ENCODE measurements at regions of chr10 and their contacts with region 1.

Region 1: DNA sequence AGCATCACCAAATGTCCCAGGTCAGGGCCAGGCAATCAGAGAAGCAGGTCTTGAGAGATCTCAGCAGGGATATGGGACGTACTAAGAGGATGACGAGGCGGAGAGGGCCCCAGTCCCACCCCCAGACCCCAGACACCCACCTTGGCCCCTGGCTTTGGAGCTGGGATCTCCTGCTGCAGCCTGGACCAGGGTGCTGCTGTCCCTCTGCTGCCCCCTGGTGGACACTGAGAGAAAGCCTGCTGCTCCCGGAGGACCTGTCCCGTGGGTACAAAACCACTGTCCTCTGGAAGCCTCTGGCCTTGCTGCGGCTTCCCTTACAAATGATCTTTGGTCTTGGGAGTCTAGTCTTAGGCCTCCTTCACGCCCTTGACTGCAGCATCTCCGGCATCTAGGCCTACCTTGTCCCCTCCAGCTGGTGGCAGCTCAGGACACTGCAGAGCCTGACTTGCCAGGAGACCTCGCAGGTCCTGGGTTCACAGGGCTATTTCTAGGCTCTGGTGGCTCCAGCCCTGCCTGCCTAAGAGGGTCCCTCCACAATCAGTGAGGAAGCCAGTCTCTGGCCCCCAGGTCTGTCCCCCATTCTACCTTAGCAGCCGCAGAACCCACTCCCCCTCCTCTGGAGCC is 97.1 kb downstream of the RGS10 start:
- DNase-seq: peak; percentile 92
- H3K4me3 Mint-ChIP-seq: no peak overlapping the region
- H3K27ac Mint-ChIP-seq: no peak overlapping the region
- H3K4me1 Mint-ChIP-seq: peaks cover 9% of the 10 kb centered on the region
- H3K27me3 Mint-ChIP-seq: no peaks in the 10 kb centered on the region

Region 2: GRCh38 chr10:119340893-119341458 is 104.4 kb before region 1 on chr10:
- CTCF ChIA-PET with region 1: no interaction called
- intact Hi-C with region 1: no loop called
- DNase-seq: no peak
- H3K4me3 Mint-ChIP-seq: no peak overlapping the region
- H3K27ac Mint-ChIP-seq: no peak overlapping the region
- H3K4me1 Mint-ChIP-seq: peaks cover 30% of the 10 kb centered on the region
- H3K27me3 Mint-ChIP-seq: no peaks in the 10 kb centered on the region

Region 3: GRCh38 chr10:119457966-119458766 is 12.7 kb after region 1 on chr10:
- CTCF ChIA-PET with region 1: interaction called, 10 read pairs
- intact Hi-C with region 1: no loop called
- DNase-seq: no peak
- H3K4me3 Mint-ChIP-seq: no peak overlapping the region
- H3K27ac Mint-ChIP-seq: no peak overlapping the region
- H3K4me1 Mint-ChIP-seq: peaks cover 2% of the 10 kb centered on the region
- H3K27me3 Mint-ChIP-seq: no peaks in the 10 kb centered on the region

Region 4: DNA sequence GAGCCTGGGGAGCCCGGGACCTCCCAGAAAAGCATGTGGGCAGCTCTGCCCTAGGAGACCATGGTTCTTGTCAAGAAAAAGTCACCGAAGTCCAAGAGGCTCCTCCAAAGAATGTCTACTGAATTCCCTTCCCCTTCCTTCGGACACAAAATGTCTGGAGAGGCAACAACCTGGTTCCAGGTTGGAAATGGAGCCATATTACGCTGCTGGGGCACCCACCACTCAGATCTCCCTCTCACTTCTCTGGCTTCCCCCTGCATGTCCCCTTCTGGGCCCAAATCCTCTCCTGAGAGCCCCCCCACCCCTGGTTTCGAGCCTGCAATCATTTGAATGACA is 44.5 kb after region 1 on chr10:
- CTCF ChIA-PET with region 1: interaction called, 14 read pairs
- intact Hi-C with region 1: loop called (anchors 1 kb)
- DNase-seq: no peak
- H3K4me3 Mint-ChIP-seq: peak overlapping the region; percentile 79
- H3K27ac Mint-ChIP-seq: peak overlapping the region; percentile 91
- H3K4me1 Mint-ChIP-seq: peaks cover 50% of the 10 kb centered on the region
- H3K27me3 Mint-ChIP-seq: no peaks in the 10 kb centered on the region

Region 5: DNA sequence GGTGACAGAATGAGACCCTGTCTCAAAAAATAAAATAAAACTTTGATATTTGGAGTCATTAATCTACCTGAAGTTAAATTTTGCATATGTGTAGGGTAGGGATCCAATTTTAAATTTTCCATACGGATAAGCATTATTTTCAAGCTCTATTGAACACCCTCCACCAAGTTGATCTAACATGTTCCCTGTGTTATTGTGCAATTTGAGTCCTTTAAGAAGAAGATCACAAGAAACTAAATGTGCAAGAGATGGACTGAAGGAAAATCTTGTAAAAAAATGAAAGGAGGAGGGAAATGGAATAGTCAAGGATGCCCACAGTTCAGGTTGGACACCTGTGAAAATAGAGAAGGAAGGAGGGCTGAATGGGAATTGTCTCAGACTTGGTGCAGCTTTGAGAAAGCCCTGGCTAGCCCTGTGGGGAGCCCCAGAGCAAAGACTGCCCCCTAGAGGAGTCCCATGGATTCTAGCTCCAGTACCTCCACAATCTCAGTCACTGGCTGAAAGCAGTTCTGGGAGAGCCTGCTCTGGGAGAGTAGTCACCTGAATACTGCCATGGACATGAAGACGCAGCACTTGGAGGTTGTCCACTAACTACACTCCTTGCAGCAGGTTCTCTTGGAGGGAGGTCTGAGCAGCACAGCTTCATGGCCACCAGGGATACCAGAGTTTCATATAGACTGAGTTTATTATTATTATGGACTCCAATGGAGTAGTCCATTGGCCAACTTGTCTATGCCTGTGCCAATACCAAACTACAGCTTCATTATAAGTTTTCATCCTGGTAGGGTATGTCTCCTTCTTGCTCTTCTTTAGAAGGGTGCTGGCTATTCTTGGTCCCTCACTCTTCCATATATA is 157.0 kb after region 1 on chr10:
- CTCF ChIA-PET with region 1: no interaction called
- intact Hi-C with region 1: loop called (anchors 1 kb)
- DNase-seq: peak; percentile 74
- H3K4me3 Mint-ChIP-seq: no peak overlapping the region
- H3K27ac Mint-ChIP-seq: no peak overlapping the region
- H3K4me1 Mint-ChIP-seq: peaks cover 15% of the 10 kb centered on the region
- H3K27me3 Mint-ChIP-seq: no peaks in the 10 kb centered on the region

Measured in activated naive CD4-positive, alpha-beta T cell treated with anti-CD3 and anti-CD28 coated beads for 36 hours (primary cell).